CD8-positive, alpha-beta T cell (primary cell): ENCODE measurements at regions of chr17 and their contacts with region 1.

Region 1: GRCh38 chr17:29369831-29370735 is 20.1 kb upstream of the TAOK1 start:
- DNase-seq: peak; percentile 16 to 79 (median 50)
- ATAC-seq: peak; percentile 92
- H3K4me3 ChIP-seq: no peak overlapping the region
- H3K4me3 Mint-ChIP-seq: no peak overlapping the region
- H3K27ac ChIP-seq: peak overlapping the region in 1 of 2 experiments; percentile 49
- H3K27ac Mint-ChIP-seq: no peak overlapping the region
- H3K4me1 ChIP-seq: peaks cover 6% of the 10 kb centered on the region
- H3K4me1 Mint-ChIP-seq: no peaks in the 10 kb centered on the region
- H3K27me3 ChIP-seq: no peaks in the 10 kb centered on the region
- H3K27me3 Mint-ChIP-seq: no peaks in the 10 kb centered on the region
- CTCF ChIP-seq: peak; percentile 81

Region 2: GRCh38 chr17:29357821-29358232 is 12.3 kb before region 1 on chr17:
- CTCF ChIA-PET with region 1: interaction called, 13 read pairs
- POLR2A ChIA-PET with region 1: no interaction called
- intact Hi-C with region 1: no loop called
- DNase-seq: no peak
- ATAC-seq: no peak
- H3K4me3 ChIP-seq: no peak overlapping the region
- H3K4me3 Mint-ChIP-seq: no peak overlapping the region
- H3K27ac ChIP-seq: no peak overlapping the region
- H3K27ac Mint-ChIP-seq: no peak overlapping the region
- H3K4me1 ChIP-seq: no peaks in the 10 kb centered on the region
- H3K4me1 Mint-ChIP-seq: no peaks in the 10 kb centered on the region
- H3K27me3 ChIP-seq: no peaks in the 10 kb centered on the region
- H3K27me3 Mint-ChIP-seq: no peaks in the 10 kb centered on the region
- CTCF ChIP-seq: no peak

Region 3: GRCh38 chr17:29420128-29420527 is 50.0 kb after region 1 on chr17:
- CTCF ChIA-PET with region 1: interaction called, 15 read pairs
- POLR2A ChIA-PET with region 1: no interaction called
- intact Hi-C with region 1: no loop called
- DNase-seq: no peak
- ATAC-seq: no peak
- H3K4me3 ChIP-seq: no peak overlapping the region
- H3K4me3 Mint-ChIP-seq: no peak overlapping the region
- H3K27ac ChIP-seq: no peak overlapping the region
- H3K27ac Mint-ChIP-seq: no peak overlapping the region
- H3K4me1 ChIP-seq: no peaks in the 10 kb centered on the region
- H3K4me1 Mint-ChIP-seq: peaks cover 20% of the 10 kb centered on the region
- H3K27me3 ChIP-seq: no peaks in the 10 kb centered on the region
- H3K27me3 Mint-ChIP-seq: no peaks in the 10 kb centered on the region
- CTCF ChIP-seq: no peak

Region 4: DNA sequence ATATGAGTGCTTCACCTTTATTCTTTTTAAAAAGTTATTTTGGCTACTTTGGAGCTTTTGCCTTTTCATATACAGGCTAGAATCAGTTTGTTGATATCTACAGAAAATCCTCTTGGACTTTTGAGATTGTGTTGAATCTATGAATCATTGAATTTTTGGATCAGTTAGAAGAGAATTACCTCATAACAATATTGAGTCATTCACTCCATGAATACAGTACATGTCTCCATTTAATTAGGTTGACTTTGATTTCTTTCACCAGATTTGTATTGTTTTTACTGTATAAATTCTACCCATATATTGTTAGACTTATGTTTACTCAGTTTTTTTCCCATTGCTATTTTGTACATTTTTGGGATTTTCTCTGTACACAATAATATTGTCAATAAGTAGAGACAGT is 74.5 kb after region 1 on chr17:
- CTCF ChIA-PET with region 1: no interaction called
- POLR2A ChIA-PET with region 1: no interaction called
- intact Hi-C with region 1: no loop called
- DNase-seq: no peak
- ATAC-seq: no peak
- H3K4me3 ChIP-seq: no peak overlapping the region
- H3K4me3 Mint-ChIP-seq: no peak overlapping the region
- H3K27ac ChIP-seq: no peak overlapping the region
- H3K27ac Mint-ChIP-seq: no peak overlapping the region
- H3K4me1 ChIP-seq: peaks cover 20% of the 10 kb centered on the region
- H3K4me1 Mint-ChIP-seq: peaks cover 60% of the 10 kb centered on the region
- H3K27me3 ChIP-seq: no peaks in the 10 kb centered on the region
- H3K27me3 Mint-ChIP-seq: no peaks in the 10 kb centered on the region
- CTCF ChIP-seq: no peak

Region 5: GRCh38 chr17:29495011-29495410 is 124.9 kb after region 1 on chr17:
- CTCF ChIA-PET with region 1: interaction called, 16 read pairs
- POLR2A ChIA-PET with region 1: no interaction called
- intact Hi-C with region 1: no loop called
- DNase-seq: no peak
- ATAC-seq: no peak
- H3K4me3 ChIP-seq: no peak overlapping the region
- H3K4me3 Mint-ChIP-seq: no peak overlapping the region
- H3K27ac ChIP-seq: no peak overlapping the region
- H3K27ac Mint-ChIP-seq: no peak overlapping the region
- H3K4me1 ChIP-seq: no peaks in the 10 kb centered on the region
- H3K4me1 Mint-ChIP-seq: no peaks in the 10 kb centered on the region
- H3K27me3 ChIP-seq: no peaks in the 10 kb centered on the region
- H3K27me3 Mint-ChIP-seq: no peaks in the 10 kb centered on the region
- CTCF ChIP-seq: no peak

Region 6: DNA sequence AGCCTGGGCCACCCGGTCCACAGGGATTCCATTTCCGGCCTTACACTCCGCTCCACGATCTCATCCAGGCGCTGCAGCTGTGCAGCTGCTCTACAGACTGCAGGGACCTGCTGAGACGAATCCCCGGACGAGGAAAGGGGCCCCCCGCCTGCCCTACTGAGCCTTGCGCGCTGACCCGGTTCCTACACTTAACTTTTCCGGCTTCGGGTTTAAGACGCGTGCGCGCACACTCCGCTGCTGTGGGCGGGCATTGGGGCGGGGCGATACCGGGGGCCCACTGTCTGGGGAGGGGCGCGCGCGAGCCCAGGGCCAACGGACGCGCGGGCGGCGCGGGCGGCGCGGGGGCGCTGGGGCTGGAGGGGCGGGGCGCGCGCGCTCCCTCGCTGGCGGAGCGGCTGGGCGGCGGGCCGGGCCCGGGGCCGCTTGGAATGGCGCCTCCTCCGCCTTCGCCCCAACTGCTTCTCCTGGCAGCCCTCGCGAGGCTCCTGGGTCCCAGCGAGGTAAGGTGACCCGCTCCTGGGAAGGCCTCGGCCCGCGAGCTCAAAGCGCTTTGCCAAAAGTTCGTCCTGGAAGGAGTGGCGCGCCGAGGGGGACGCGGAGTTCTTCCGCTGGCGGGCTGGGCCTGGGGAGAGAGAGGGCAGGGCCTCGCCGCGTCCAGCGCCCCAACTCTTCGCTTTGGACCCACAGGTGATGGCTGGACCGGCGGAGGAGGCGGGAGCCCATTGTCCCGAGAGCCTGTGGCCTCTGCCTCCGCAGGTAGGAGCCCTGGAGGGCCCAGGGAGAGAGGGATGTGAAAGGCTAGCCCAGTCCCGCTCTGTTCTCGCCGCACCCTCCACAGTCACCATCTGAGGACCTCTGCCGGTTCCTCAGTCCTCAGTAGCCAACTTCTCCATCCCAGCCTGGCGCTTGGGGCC is 198.5 kb after region 1 on chr17 and contains the start of gene TP53I13:
- CTCF ChIA-PET with region 1: interaction called, 24 read pairs
- POLR2A ChIA-PET with region 1: interaction called, 6 read pairs
- intact Hi-C with region 1: no loop called
- DNase-seq: peak; percentile 71 to 95 (median 91)
- ATAC-seq: peak; percentile 57
- H3K4me3 ChIP-seq: peak within 1 kb of the TSS; percentile 66 to 94
- H3K4me3 Mint-ChIP-seq: peak within 1 kb of the TSS; percentile 94
- H3K27ac ChIP-seq: peak within 1 kb of the TSS; percentile 53 to 78
- H3K27ac Mint-ChIP-seq: peak within 1 kb of the TSS; percentile 86
- H3K4me1 ChIP-seq: peaks cover 30% of the 10 kb centered on the region
- H3K4me1 Mint-ChIP-seq: peaks cover 41% of the 10 kb centered on the region
- H3K27me3 ChIP-seq: no peaks in the 10 kb centered on the region
- H3K27me3 Mint-ChIP-seq: no peaks in the 10 kb centered on the region
- CTCF ChIP-seq: no peak
- total RNA-seq, gene TP53I13: 50.2 to 54.1 TPM